ENCODE measurements at regions of chr22 and their contacts with region 1.

Region 1: GRCh38 chr22:36873680-36874537 is 13.1 kb downstream of the NCF4 start:
- DNase-seq: peak; percentile 22
- H3K4me3 Mint-ChIP-seq: no peak overlapping the region
- H3K27ac Mint-ChIP-seq: peak overlapping the region; percentile 86
- H3K4me1 Mint-ChIP-seq: peaks cover 22% of the 10 kb centered on the region
- H3K27me3 Mint-ChIP-seq: no peaks in the 10 kb centered on the region

Region 2: DNA sequence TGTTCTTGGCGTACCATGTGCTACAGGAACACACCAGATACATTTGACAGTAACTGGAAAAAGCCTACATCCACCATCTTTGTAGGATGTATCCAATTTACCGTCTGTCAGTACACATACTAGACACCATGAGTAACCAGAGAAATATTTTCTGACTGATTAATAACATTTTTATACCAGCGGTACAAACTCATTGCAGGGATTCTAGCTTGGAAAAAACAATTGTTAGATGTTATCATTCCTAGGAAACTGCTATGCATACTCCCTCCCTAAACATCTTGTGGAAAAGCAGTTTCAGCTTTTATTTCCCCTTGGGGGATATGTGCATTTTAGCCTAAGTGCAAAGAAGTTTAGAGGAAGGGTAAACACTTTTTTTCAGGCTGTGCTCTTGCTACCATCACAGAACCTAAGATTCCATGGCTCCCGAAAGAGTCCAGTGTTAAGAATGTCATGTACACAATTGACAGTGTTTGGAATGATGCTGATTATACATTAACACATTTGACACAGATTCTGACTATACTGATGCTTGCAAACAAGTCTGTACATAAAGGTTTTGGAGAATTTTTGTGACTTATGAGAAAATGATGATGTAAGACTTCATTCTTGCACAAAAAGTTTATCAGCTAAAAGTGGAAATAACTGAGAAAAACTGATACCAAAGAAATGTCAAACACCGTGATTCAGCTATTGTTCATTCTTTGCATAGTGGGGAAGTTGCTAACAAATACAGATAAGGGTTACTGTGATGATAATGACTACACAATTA is 10.6 kb after region 1 on chr22:
- intact Hi-C with region 1: loop called (anchors 1 kb)
- DNase-seq: no peak
- H3K4me3 Mint-ChIP-seq: no peak overlapping the region
- H3K27ac Mint-ChIP-seq: peak overlapping the region; percentile 60
- H3K4me1 Mint-ChIP-seq: peaks cover 26% of the 10 kb centered on the region
- H3K27me3 Mint-ChIP-seq: peaks cover 2% of the 10 kb centered on the region

Region 3: DNA sequence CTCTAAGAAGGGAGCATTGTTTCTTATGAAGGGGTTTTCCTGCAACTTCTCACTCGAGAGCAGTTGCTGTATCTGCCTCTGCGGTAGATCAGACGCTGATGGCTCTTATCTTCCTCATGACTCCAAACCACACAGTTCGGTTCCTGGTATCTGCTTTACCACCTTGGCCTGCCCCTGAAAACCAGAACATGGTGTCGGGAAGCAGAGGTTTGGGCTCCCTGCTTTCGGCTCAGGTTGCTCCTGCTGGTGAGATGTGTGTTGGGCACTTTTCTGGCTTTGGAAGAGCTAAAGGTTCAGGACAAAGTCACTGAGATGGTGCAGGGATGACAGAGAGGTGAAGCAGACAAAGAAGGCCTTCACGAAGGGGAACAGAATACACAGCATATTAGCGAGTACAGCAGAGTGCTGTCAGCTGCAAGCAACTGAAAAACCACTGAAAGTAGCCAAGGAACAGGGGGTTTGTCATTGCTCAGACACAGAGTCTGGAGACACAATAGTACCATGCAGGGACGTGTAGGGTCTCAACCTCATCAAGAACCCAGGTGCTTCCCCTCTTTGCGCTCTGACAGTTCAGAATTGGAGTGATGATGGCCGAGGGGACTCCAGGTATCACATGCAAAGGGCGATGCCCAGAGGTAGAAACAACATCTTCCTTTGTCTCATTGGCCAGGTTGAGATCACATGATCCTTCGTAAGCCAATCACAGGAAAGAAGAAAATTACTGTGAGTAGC is 27.7 kb after region 1 on chr22:
- intact Hi-C with region 1: loop called (anchors 1 kb)
- DNase-seq: peak; percentile 57
- H3K4me3 Mint-ChIP-seq: peak overlapping the region; percentile 57
- H3K27ac Mint-ChIP-seq: peak overlapping the region; percentile 95
- H3K4me1 Mint-ChIP-seq: peaks cover 31% of the 10 kb centered on the region
- H3K27me3 Mint-ChIP-seq: peaks cover 7% of the 10 kb centered on the region

Region 4: GRCh38 chr22:36977947-36978660 is 104.2 kb after region 1 on chr22:
- intact Hi-C with region 1: loop called (anchors 5 kb)
- DNase-seq: peak; percentile 84
- H3K4me3 Mint-ChIP-seq: peak overlapping the region; percentile 83
- H3K27ac Mint-ChIP-seq: peak overlapping the region; percentile 84
- H3K4me1 Mint-ChIP-seq: peaks cover 8% of the 10 kb centered on the region
- H3K27me3 Mint-ChIP-seq: no peaks in the 10 kb centered on the region

Measured in activated T-helper 2 cell treated with anti-CD3 and anti-CD28 coated beads, Interferon-gamma antibody, Interleukin-2, Interleukin-4, amounts not matched to agents 10 μg/mL and 5 μg/mL and 100 μg/mL, durations not matched to agents 14 hours and 24 hours and 36 hours (primary cell).